ENCODE measurements at regions of chr20 and their contacts with region 1.

Region 1: DNA sequence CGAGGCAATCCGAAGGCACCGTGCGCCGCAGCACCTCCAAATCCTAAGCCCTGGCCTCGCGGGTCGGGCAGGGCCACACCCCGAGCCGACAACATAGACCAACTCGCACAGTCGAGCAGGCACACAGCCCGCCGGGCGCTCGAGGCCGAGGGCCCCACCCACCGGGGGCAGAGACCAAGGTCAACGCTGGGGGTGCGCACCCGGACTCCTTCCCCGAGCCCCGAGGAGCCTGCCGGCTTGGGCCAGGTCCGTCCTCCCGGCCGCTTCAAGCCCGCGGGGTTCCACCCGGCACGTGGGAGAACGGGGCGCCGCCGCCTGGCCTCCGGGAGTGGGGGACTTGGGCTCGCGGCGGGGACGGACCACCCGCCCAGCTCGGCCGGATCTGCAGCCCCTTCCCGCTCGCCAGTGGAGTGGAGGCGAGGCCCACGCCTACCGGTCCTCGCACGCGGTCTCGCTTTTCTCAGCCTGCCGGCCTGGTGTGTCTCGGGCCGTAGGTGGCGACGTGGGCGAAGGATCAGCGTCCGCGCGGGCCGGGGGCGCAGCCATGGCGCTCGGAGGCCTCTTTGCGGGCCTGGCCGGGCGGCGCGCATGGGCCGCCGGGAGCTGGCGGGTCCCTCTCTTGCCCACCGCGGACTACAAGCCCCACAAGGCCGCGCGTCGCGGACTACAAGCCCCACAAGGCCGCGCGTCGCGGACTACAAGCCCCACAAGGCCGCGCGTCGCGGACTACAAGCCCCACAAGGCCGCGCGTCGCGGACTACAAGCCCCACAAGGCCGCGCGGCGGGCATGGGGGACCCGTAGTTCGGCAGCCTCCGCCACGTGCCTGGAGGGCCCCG is at the start of gene UCKL1:
- DNase-seq: peak; percentile 78 to 93 (median 89)
- ATAC-seq: peak; percentile 81
- H3K4me3 ChIP-seq: peak within 1 kb of the TSS; percentile 73 to 95
- H3K4me3 Mint-ChIP-seq: peak within 1 kb of the TSS; percentile 82
- H3K27ac ChIP-seq: peak within 1 kb of the TSS; percentile 64 to 77
- H3K27ac Mint-ChIP-seq: peak within 1 kb of the TSS; percentile 76
- H3K4me1 ChIP-seq: peaks cover 28% of the 10 kb centered on the region
- H3K4me1 Mint-ChIP-seq: peaks cover 34% of the 10 kb centered on the region
- H3K27me3 ChIP-seq: no peaks in the 10 kb centered on the region
- H3K27me3 Mint-ChIP-seq: no peaks in the 10 kb centered on the region
- CTCF ChIP-seq: no peak
- total RNA-seq, gene UCKL1: 29.6 to 33.7 TPM

Region 2: GRCh38 chr20:63014710-63015109 is 941.3 kb before region 1 on chr20:
- CTCF ChIA-PET with region 1: no interaction called
- POLR2A ChIA-PET with region 1: no interaction called
- intact Hi-C with region 1: no loop called
- DNase-seq: no peak
- ATAC-seq: no peak
- H3K4me3 ChIP-seq: no peak overlapping the region
- H3K4me3 Mint-ChIP-seq: no peak overlapping the region
- H3K27ac ChIP-seq: no peak overlapping the region
- H3K27ac Mint-ChIP-seq: no peak overlapping the region
- H3K4me1 ChIP-seq: peaks cover 8% of the 10 kb centered on the region
- H3K4me1 Mint-ChIP-seq: peaks cover 8% of the 10 kb centered on the region
- H3K27me3 ChIP-seq: peaks cover 0 to 3% of the 10 kb centered on the region in 2 experiments
- H3K27me3 Mint-ChIP-seq: peaks cover 29% of the 10 kb centered on the region
- CTCF ChIP-seq: no peak

Region 3: DNA sequence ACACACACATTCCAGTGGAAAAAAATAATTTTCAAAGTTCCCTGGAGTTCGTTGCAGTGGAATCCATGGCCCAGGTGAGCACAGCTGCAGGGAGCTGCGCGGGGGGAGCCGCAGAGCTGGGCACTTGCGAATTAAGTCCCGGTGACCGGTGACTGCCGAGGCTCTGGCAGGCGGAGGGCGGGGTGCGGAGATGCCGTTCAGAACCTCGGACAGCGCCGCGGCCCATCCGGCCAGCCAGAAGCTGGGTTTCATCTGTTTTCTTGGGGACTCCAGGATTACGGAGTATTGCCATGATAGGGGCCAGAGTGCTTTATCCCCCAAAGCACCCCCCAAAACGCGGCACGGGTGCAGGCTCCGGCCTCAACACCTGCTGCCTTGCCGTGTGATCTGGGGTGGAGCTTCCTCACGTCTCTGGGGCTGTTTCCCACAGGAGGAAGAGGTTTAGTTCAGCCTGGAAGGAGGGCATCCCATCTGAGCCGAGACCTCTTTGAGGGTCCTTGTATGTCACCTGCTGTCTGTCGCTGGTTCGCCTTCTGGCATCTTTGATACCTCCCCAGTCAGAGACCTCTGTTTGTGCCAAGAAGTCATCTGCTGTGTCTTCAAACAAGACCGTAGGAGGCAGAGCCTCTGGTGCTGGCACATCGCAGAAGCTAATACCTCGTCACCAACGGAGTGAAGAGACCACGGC is 839.5 kb before region 1 on chr20:
- CTCF ChIA-PET with region 1: no interaction called
- POLR2A ChIA-PET with region 1: no interaction called
- intact Hi-C with region 1: no loop called
- DNase-seq: no peak
- ATAC-seq: no peak
- H3K4me3 ChIP-seq: no peak overlapping the region
- H3K4me3 Mint-ChIP-seq: no peak overlapping the region
- H3K27ac ChIP-seq: no peak overlapping the region
- H3K27ac Mint-ChIP-seq: no peak overlapping the region
- H3K4me1 ChIP-seq: no peaks in the 10 kb centered on the region
- H3K4me1 Mint-ChIP-seq: no peaks in the 10 kb centered on the region
- H3K27me3 ChIP-seq: peaks cover 0 to 6% of the 10 kb centered on the region in 2 experiments
- H3K27me3 Mint-ChIP-seq: peaks cover 35% of the 10 kb centered on the region
- CTCF ChIP-seq: no peak

Region 4: GRCh38 chr20:63635431-63636141 is 320.5 kb before region 1 on chr20:
- CTCF ChIA-PET with region 1: interaction called, 4 read pairs
- POLR2A ChIA-PET with region 1: no interaction called
- intact Hi-C with region 1: loop called in 1 of 2 experiments (anchors 5 kb)
- DNase-seq: peak; percentile 59 to 95 (median 80)
- ATAC-seq: peak; percentile 51
- H3K4me3 ChIP-seq: peak overlapping the region; percentile 21 to 34
- H3K4me3 Mint-ChIP-seq: peak overlapping the region; percentile 77
- H3K27ac ChIP-seq: peak overlapping the region; percentile 86 to 91
- H3K27ac Mint-ChIP-seq: peak overlapping the region; percentile 100
- H3K4me1 ChIP-seq: peaks cover 75% of the 10 kb centered on the region
- H3K4me1 Mint-ChIP-seq: peaks cover 64% of the 10 kb centered on the region
- H3K27me3 ChIP-seq: no peaks in the 10 kb centered on the region
- H3K27me3 Mint-ChIP-seq: no peaks in the 10 kb centered on the region
- CTCF ChIP-seq: no peak

Region 5: DNA sequence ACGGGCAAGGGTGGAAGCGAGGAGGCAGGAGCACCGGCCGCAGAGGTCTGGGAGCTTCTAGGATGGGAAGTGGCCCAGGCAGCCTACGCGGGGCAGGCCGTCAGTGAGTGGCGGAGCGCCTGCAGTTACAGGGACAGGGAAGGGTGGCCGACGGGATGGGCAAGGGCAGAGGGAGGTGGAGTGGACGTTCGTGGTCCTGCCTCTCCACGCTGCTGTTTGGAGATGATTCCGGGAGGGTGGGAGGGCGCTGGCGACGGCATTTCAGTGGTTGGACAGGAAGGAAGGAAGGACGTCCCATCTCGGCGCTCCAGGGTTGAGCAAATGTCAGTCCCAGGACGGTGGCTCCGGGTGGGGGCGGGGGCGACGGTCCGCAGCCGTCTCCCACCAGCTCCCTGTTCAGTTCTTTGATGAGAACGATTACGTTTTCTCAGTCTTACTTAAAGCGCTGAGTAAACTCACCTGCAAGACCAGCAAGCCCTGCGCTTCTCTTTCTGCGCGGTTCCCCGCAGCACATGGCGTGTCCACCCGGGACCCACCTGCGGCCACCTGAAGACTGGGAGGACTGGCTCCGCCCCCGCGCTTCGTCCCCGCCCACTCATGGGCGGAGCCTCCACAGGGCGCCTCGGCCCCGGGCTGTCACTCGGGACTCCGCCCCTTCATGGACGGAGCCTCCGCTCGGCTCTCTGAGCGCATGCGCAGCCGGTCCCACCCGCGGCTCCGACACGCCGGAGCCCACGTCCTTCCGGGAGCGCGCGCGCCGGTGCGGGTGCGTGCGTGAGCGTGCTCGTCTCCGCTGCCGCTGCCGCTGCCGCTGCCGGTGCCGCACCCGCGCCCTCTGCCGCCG is 61.5 kb before region 1 on chr20 and contains the start of gene DNAJC5:
- CTCF ChIA-PET with region 1: no interaction called
- POLR2A ChIA-PET with region 1: interaction called, 10 read pairs
- intact Hi-C with region 1: loop called (anchors 1 kb)
- DNase-seq: peak; percentile 93 to 99 (median 97)
- ATAC-seq: peak; percentile 92
- H3K4me3 ChIP-seq: peak within 1 kb of the TSS; percentile 46 to 66
- H3K4me3 Mint-ChIP-seq: peak within 1 kb of the TSS; percentile 95
- H3K27ac ChIP-seq: peak within 1 kb of the TSS; percentile 55 to 65
- H3K27ac Mint-ChIP-seq: peak within 1 kb of the TSS; percentile 96
- H3K4me1 ChIP-seq: peaks cover 41% of the 10 kb centered on the region
- H3K4me1 Mint-ChIP-seq: peaks cover 44% of the 10 kb centered on the region
- H3K27me3 ChIP-seq: no peaks in the 10 kb centered on the region
- H3K27me3 Mint-ChIP-seq: no peaks in the 10 kb centered on the region
- CTCF ChIP-seq: no peak
- total RNA-seq, gene DNAJC5: 24.3 TPM

Region 6: GRCh38 chr20:63911176-63911575 is 44.9 kb before region 1 on chr20:
- CTCF ChIA-PET with region 1: interaction called, 7 read pairs
- POLR2A ChIA-PET with region 1: no interaction called
- intact Hi-C with region 1: loop called in 1 of 2 experiments (anchors 1 kb)
- DNase-seq: no peak
- ATAC-seq: no peak
- H3K4me3 ChIP-seq: no peak overlapping the region
- H3K4me3 Mint-ChIP-seq: no peak overlapping the region
- H3K27ac ChIP-seq: no peak overlapping the region
- H3K27ac Mint-ChIP-seq: peak overlapping the region; percentile 46
- H3K4me1 ChIP-seq: peaks cover 13% of the 10 kb centered on the region
- H3K4me1 Mint-ChIP-seq: peaks cover 45% of the 10 kb centered on the region
- H3K27me3 ChIP-seq: no peaks in the 10 kb centered on the region
- H3K27me3 Mint-ChIP-seq: no peaks in the 10 kb centered on the region
- CTCF ChIP-seq: no peak

Region 7: GRCh38 chr20:63942250-63942959 is 13.6 kb before region 1 on chr20:
- CTCF ChIA-PET with region 1: no interaction called
- POLR2A ChIA-PET with region 1: interaction called, 10 read pairs
- intact Hi-C with region 1: no loop called
- DNase-seq: peak in 3 of 9 experiments; percentile 45 to 59 (median 56)
- ATAC-seq: no peak
- H3K4me3 ChIP-seq: no peak overlapping the region
- H3K4me3 Mint-ChIP-seq: peak overlapping the region; percentile 57
- H3K27ac ChIP-seq: peak overlapping the region; percentile 27 to 58
- H3K27ac Mint-ChIP-seq: peak overlapping the region; percentile 45
- H3K4me1 ChIP-seq: peaks cover 23% of the 10 kb centered on the region
- H3K4me1 Mint-ChIP-seq: peaks cover 23% of the 10 kb centered on the region
- H3K27me3 ChIP-seq: no peaks in the 10 kb centered on the region
- H3K27me3 Mint-ChIP-seq: no peaks in the 10 kb centered on the region
- CTCF ChIP-seq: no peak

Measured in CD8-positive, alpha-beta T cell (primary cell).